ENCODE measurements at regions of chr5 and their contacts with region 1.

Region 1: DNA sequence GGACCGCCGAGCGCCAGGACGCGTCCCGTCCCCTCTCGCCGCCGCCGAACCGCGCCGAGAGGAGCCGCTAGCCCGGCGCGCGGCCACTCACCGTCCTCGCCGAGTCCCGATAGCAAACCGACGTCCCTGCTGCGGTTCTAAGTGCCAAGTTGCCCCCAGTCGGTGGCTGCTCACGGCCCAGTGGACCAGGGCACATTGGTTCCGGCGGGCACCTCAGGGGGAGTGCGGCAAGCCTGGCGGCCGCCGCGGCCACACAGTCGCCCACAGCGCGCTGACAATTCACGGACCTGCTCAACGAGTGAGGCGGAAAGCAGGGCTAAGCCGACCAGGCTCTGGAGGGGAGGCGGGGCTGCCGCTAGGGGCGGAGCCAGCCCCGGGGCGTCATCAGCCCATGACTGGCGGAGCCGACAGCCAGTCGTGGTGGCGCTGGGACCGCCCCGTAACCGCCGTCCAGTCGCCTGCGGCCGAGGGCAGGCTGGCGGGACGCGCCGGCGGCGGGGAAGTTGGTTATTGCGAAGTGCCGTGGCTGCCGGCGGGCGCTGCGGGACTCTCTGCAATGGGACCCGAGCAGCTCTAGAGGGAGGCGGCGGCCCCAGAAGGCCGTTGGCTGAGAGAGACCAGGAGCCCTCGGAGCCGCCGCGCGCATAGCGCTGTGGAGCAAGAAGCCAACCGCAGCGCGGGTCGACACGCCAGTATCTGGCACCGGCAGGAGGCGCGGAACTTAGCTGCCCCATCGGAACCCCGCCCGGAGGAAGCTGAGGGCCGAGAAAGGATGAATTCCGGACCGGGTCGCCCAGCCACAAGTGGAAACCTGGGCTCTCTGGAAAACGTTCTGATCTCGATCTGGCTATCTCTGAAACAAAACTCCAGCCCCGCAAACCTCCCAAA is at the start of gene MARCHF3:
- DNase-seq: peak; percentile 96
- H3K4me3 Mint-ChIP-seq: peak within 1 kb of the TSS; percentile 89
- H3K27ac Mint-ChIP-seq: peak within 1 kb of the TSS; percentile 69
- H3K4me1 Mint-ChIP-seq: peaks cover 30% of the 10 kb centered on the region
- H3K27me3 Mint-ChIP-seq: peaks cover 32% of the 10 kb centered on the region
- total RNA-seq, gene MARCHF3: 5.2 and 5.9 TPM in 2 replicates

Region 2: DNA sequence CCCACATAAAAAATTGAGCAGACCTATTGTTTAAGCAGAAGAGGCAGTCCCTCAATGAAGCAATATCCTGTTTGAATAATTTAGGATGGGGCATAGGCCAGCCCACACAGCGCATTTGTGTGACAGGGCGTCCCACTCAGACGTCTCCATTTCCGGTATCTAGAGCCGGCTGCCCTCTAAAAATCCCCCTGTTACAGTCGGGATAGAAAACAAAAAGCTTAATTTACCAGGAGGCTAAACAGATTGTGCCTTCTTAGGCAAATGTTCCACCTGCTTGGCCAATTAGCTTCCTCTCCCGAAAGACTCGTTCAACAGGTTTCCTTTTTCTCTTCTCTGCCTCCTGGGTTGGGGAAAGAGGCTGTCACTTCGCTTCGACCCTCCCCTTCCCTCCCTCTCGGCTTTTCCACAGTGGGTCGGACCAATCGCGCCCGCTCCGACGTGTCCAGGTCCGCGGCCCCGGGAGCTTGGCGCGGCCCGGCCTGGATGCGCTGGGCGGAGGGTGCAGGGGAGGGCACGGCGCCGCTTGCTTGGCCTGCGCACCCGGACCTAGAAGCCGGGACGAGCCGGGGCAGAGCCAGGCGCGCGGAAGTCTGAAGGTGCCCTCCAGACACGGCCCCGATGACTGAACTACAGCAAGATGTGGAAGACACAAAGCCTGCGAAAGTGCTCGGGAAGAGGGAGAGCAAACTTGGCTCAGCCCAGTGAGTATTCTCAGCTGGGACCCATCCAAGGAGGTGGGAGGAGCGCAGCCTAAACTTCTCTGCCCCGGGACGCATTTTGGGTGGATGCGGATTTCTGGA is 607.3 kb before region 1 on chr5 and contains the start of gene GRAMD2B:
- intact Hi-C with region 1: loop called (anchors 2 kb)
- DNase-seq: peak; percentile 53
- H3K4me3 Mint-ChIP-seq: peak within 1 kb of the TSS; percentile 86
- H3K27ac Mint-ChIP-seq: peak within 1 kb of the TSS; percentile 81
- H3K4me1 Mint-ChIP-seq: peaks cover 40% of the 10 kb centered on the region
- H3K27me3 Mint-ChIP-seq: no peaks in the 10 kb centered on the region
- total RNA-seq, gene GRAMD2B: 8.3 and 9.5 TPM in 2 replicates

Region 3: DNA sequence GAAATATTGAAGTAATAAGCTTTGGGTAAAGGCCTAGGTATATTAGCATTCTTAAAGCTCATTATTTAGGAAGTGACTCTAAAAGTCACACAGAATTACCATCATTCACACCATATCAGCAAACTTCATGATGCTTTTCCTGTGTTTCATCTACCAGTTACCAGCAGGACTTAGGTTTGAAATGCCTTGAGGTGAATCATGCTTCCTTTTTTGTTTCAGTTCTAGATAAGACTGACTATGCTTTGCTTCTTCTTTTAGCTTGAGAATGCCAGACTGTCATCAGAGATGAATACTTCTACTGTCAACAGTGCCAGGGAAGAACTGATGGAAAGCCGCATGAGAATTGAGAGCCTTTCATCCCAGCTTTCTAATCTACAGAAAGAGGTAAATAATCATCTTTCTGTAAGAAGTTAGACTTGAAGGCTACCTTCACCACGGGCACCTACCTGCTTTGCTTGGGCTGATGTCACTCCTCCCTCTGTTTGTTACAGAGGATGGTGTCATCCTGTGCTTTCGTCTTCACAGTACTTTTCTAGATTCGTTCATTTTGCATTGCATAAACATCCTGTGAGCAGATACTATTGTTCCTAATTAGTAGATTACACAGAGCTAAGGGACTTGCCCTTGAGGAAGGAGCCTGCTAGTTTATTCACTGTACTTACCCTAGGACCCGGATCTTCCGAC is 218.8 kb before region 1 on chr5:
- intact Hi-C with region 1: loop called (anchors 1 kb)
- DNase-seq: peak; percentile 50
- H3K4me3 Mint-ChIP-seq: peak overlapping the region; percentile 81
- H3K27ac Mint-ChIP-seq: peak overlapping the region; percentile 90
- H3K4me1 Mint-ChIP-seq: peaks cover 69% of the 10 kb centered on the region
- H3K27me3 Mint-ChIP-seq: no peaks in the 10 kb centered on the region

Region 4: GRCh38 chr5:126972062-126972895 is 58.2 kb before region 1 on chr5:
- intact Hi-C with region 1: loop called (anchors 1 kb)
- DNase-seq: peak; percentile 31
- H3K4me3 Mint-ChIP-seq: peak overlapping the region; percentile 58
- H3K27ac Mint-ChIP-seq: peak overlapping the region; percentile 90
- H3K4me1 Mint-ChIP-seq: peaks cover 47% of the 10 kb centered on the region
- H3K27me3 Mint-ChIP-seq: no peaks in the 10 kb centered on the region

Region 5: DNA sequence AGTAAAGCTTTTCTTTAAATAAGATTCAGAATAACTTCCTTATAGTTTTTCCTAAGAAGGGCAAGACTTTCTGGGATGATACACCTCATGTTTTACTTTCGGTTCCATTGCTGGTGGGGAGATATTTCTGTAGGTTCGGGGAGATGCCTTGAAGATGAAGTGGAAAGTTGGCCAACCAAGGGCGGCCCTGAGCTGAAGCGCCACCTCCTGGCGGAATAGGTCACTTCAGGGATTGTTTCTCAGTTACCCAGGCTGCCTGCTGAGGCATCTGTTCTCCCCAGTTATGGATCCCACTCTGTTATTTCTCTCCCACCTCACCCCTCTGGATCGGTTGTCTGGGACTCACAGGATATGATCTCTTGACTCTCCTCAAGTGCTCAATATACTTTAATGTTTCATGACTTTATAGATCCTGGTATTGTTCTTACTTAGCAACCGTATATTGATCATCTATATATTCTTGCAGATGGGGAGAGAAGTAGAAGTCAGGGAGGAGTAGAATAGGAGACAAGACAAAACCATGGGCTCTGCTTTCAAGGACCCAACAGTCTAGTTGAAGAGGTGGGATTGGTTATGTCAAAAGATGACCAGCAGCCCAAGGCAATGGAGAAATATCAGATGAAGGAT is 283.5 kb after region 1 on chr5:
- intact Hi-C with region 1: loop called (anchors 10 kb)
- DNase-seq: peak; percentile 39
- H3K4me3 Mint-ChIP-seq: no peak overlapping the region
- H3K27ac Mint-ChIP-seq: no peak overlapping the region
- H3K4me1 Mint-ChIP-seq: peaks cover 4% of the 10 kb centered on the region
- H3K27me3 Mint-ChIP-seq: peaks cover 19% of the 10 kb centered on the region

Measured in activated T-helper 1 cell treated with anti-CD3 and anti-CD28 coated beads, Interleukin-12 subunit alpha, Interleukin-12 subunit beta, Interleukin-2, Interleukin-4 antibody, amounts not matched to agents 30 ng/mL and 10 ng/mL and 1 ng/mL, durations not matched to agents 14 hours and 24 hours and 36 hours (primary cell).